Heart right ventricle (tissue), 16 donors: ENCODE measurements at regions of chr6 and their contacts with region 1.

Region 1: GRCh38 chr6:137944793-137945498 is 77.9 kb downstream of the TNFAIP3 start:
- DNase-seq: peak in 1 of 2 donors; percentile 31
- ATAC-seq: peak in 7 of 8 donors; percentile 72 to 89 (median 81)
- H3K4me3 ChIP-seq: no peak overlapping the region
- H3K27ac ChIP-seq: peak overlapping the region in 1 of 10 donors; percentile 3
- H3K4me1 ChIP-seq: peaks cover 0 to 11% (median 0%) of the 10 kb centered on the region in 9 donors
- H3K27me3 ChIP-seq: no peaks in the 10 kb centered on the region
- CTCF ChIP-seq: peak; percentile 63 to 86 (median 76)

Region 2: GRCh38 chr6:137799950-137800568 is 144.9 kb before region 1 on chr6:
- intact Hi-C with region 1: loop called in 5 of 10 experiments (anchors 5 to 10 kb)
- DNase-seq: peak in 1 of 2 donors; percentile 60
- ATAC-seq: peak in 6 of 8 donors; percentile 41 to 66 (median 58)
- H3K4me3 ChIP-seq: no peak overlapping the region
- H3K27ac ChIP-seq: no peak overlapping the region
- H3K4me1 ChIP-seq: peaks cover 0 to 8% (median 0%) of the 10 kb centered on the region in 9 donors
- H3K27me3 ChIP-seq: no peaks in the 10 kb centered on the region
- CTCF ChIP-seq: peak in 7 of 9 donors; percentile 46 to 69 (median 57)

Region 3: DNA sequence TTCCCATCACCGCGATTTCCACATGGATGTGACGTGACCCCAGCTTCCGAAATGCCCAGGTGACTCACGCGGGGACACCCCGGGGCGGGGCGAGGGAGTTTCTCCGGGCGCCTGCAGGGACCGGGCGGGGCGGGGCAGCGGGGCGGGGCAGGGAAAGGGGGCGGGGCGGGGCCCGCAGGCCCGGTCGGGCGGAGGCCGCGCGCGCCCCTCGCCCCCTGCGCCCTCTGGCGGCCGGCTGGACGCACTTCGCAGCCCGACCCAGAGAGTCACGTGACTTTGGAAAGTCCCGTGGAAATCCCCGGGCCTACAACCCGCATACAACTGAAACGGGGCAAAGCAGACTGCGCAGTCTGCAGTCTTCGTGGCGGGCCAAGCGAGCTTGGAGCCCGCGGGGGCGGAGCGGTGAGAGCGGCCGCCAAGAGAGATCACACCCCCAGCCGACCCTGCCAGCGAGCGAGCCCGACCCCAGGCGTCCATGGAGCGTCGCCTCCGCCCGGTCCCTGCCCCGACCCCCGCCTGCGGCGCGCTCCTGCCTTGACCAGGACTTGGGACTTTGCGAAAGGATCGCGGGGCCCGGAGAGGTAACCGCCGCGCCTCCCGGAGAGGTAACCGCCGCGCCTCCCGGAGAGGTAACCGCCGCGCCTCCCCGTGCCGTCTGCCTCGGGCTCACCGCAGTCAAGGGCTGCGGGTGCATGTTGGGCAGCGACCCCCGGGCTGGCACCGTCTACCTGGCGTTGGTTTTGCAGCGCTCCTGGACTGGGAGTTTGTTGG is 77.8 kb before region 1 on chr6 and contains the start of gene TNFAIP3:
- intact Hi-C with region 1: loop called in 7 of 10 experiments (anchors 2 to 10 kb)
- DNase-seq: peak; percentile 92 to 93
- ATAC-seq: peak; percentile 93 to 97 (median 94)
- H3K4me3 ChIP-seq: peak within 1 kb of the TSS; percentile 75 to 99 (median 85)
- H3K27ac ChIP-seq: peak within 1 kb of the TSS; percentile 57 to 96 (median 88)
- H3K4me1 ChIP-seq: peaks cover 3 to 58% (median 39%) of the 10 kb centered on the region in 9 donors
- H3K27me3 ChIP-seq: no peaks in the 10 kb centered on the region
- CTCF ChIP-seq: peak; percentile 68 to 99 (median 82)
- total RNA-seq, gene TNFAIP3: 3.2 to 33.3 (median 9.6) TPM

Region 4: DNA sequence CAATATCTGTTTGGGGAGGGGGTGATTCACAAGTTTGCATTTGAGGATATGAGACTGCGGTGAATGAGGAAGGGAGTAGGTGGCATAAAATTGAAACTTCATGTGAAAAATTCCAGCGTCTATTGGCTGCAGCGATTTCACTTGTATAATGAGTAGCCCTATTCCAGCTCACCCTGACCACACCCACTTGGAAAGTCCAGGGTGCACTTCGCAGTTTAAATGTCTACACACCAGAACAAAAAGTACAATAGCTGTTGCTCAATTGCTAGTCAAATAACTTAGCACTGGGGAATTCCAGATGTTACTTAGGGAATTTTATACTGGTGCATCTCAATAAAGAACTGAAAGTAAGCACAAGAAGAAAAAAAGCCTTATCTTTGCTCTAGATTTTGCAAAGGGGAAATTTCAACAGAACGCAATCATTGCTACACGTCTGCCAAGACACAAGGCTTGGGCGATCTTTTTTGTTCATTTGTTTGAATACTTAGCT is 71.6 kb before region 1 on chr6:
- intact Hi-C with region 1: loop called in 6 of 10 experiments (anchors 5 to 10 kb)
- DNase-seq: peak in 1 of 2 donors; percentile 65
- ATAC-seq: peak; percentile 81 to 94 (median 86)
- H3K4me3 ChIP-seq: peak overlapping the region in 6 of 10 donors; percentile 14 to 75 (median 25)
- H3K27ac ChIP-seq: peak overlapping the region in 7 of 10 donors; percentile 7 to 83 (median 44)
- H3K4me1 ChIP-seq: peaks cover 0 to 77% (median 38%) of the 10 kb centered on the region in 9 donors
- H3K27me3 ChIP-seq: no peaks in the 10 kb centered on the region
- CTCF ChIP-seq: no peak

Region 5: DNA sequence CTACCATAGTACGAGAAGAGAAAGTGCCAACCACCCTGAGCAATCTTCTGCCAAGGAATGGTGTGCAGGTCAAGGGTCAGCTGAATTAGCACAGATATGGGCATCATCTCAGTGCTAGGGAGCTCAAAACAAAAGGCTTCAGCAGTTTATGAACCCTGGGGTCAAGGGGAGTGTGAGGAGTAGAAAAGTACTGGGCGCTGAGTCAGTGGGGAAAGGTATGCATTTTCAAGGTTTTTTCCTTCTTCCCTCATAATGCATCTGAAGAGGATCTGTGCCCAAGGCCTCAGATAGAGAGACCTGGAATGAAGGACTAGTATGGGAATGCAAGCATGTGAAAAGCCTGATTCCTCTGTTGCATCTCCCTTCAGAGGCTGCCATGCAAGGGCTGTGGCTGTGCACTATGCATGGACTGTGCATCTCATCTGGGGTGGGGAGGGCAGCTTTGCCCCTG is 80.6 kb after region 1 on chr6:
- intact Hi-C with region 1: no loop called
- DNase-seq: no peak
- ATAC-seq: no peak
- H3K4me3 ChIP-seq: no peak overlapping the region
- H3K27ac ChIP-seq: no peak overlapping the region
- H3K4me1 ChIP-seq: no peaks in the 10 kb centered on the region
- H3K27me3 ChIP-seq: no peaks in the 10 kb centered on the region
- CTCF ChIP-seq: no peak